ENCODE measurements at regions of chr3 and their contacts with region 1.

Region 1: GRCh38 chr3:58305882-58306711 is at the starts of genes HTD2 and RPP14:
- DNase-seq: peak; percentile 99
- H3K4me3 Mint-ChIP-seq: peak within 1 kb of the TSS; percentile 94
- H3K27ac Mint-ChIP-seq: peak within 1 kb of the TSS; percentile 99
- H3K4me1 Mint-ChIP-seq: peaks cover 36% of the 10 kb centered on the region
- H3K27me3 Mint-ChIP-seq: peaks cover 21% of the 10 kb centered on the region

Region 2: GRCh38 chr3:58177747-58178527 is 128.2 kb before region 1 on chr3:
- CTCF ChIA-PET with region 1: interaction called, 16 read pairs
- DNase-seq: peak; percentile 93
- H3K4me3 Mint-ChIP-seq: peak overlapping the region; percentile 50
- H3K27ac Mint-ChIP-seq: no peak overlapping the region
- H3K4me1 Mint-ChIP-seq: peaks cover 22% of the 10 kb centered on the region
- H3K27me3 Mint-ChIP-seq: peaks cover 53% of the 10 kb centered on the region

Region 3: DNA sequence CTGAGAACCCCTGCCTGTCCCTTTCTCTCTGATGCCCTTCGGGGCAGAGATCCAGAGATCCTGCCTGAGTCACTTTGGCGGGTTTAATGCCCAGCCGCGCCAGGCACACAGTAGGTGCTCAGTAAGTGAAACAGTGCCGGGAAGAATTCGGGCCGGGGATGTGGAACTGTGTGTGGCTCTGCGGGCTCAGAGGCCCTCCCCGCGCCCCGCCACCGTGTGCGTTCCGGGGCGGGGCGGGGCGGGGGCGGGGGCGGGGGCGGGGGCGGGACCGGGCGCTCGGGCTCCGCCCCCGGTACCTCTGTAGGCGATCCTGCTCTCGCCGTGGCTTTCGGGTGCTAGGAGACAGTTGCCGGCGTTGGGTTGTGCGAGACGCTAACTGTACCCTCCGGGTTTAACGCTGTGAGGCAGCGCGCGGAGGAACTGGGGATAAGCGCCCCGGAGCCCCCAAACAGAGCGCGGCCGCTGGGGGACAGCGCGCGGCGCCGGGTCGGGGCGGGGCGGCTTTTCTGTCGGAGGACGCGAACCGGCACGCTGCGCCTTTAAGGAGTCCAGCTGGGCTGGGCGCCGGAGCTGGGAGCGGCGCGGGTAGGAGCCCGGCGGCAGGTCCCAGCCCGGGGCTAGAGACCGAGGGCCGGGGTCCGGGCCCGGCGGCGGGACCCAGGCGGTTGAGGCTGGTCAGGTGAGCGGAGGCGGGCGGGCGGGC is 68.7 kb before region 1 on chr3 and contains the start of gene ABHD6:
- CTCF ChIA-PET with region 1: interaction called, 14 read pairs
- DNase-seq: peak; percentile 82
- H3K4me3 Mint-ChIP-seq: peak within 1 kb of the TSS; percentile 87
- H3K27ac Mint-ChIP-seq: peak within 1 kb of the TSS; percentile 78
- H3K4me1 Mint-ChIP-seq: peaks cover 15% of the 10 kb centered on the region
- H3K27me3 Mint-ChIP-seq: peaks cover 54% of the 10 kb centered on the region

Region 4: GRCh38 chr3:58332575-58333188 is 26.6 kb after region 1 on chr3 and contains the start of gene PXK:
- CTCF ChIA-PET with region 1: interaction called, 20 read pairs
- DNase-seq: peak; percentile 84
- H3K4me3 Mint-ChIP-seq: peak within 1 kb of the TSS; percentile 100
- H3K27ac Mint-ChIP-seq: peak within 1 kb of the TSS; percentile 95
- H3K4me1 Mint-ChIP-seq: peaks cover 39% of the 10 kb centered on the region
- H3K27me3 Mint-ChIP-seq: no peaks in the 10 kb centered on the region

Region 5: DNA sequence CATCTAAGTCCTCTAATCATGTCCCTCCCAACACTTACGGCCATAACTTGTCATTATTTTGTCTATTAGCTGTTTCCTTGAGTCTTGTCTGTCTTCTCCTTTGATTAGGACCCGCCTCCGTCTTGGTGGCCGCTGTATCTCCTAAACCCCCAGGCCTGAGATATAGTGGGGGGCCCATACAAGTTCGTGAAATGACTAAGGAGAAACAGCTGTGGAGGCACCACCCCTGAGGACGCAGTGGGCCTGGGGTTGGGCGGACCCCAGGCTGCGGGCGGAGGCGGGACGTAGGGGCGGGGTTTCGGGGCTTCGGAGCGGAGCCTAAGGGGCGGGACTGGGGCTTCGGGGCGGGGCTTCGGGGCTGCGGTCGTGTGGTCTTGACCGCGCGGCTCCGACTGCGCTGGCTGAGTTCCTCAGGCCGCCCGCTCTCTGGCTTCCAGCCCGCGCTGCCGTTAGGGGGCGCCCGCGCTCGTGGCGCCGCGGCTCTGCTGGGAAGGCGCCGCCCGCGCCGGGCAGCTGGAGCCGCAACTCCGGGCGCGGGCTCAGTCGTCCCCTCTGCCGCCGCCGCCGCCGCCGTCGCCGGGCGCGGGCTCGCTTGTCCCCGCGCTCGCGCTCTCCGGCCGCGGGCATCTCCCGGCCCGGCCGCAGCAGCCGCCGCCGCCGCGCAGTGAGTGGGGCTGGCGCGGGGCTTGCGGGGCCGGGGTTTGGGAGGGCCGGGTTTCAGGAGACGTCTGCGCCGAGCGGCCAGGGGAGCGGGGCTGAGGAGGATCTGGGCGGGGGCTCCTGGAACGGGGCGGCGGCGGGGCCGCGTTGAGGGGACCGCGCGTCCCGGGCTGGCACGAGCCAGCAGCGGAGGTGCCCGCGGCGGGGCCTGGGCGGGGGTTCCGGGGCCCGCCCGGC is 185.7 kb after region 1 on chr3 and contains the start of gene KCTD6:
- CTCF ChIA-PET with region 1: interaction called, 36 read pairs
- DNase-seq: peak; percentile 87
- H3K4me3 Mint-ChIP-seq: peak within 1 kb of the TSS; percentile 82
- H3K27ac Mint-ChIP-seq: peak within 1 kb of the TSS; percentile 73
- H3K4me1 Mint-ChIP-seq: peaks cover 30% of the 10 kb centered on the region
- H3K27me3 Mint-ChIP-seq: peaks cover 44% of the 10 kb centered on the region

Region 6: GRCh38 chr3:58532794-58533220 is 226.7 kb after region 1 on chr3:
- CTCF ChIA-PET with region 1: interaction called, 46 read pairs
- DNase-seq: peak; percentile 83
- H3K4me3 Mint-ChIP-seq: no peak overlapping the region
- H3K27ac Mint-ChIP-seq: no peak overlapping the region
- H3K4me1 Mint-ChIP-seq: peaks cover 12% of the 10 kb centered on the region
- H3K27me3 Mint-ChIP-seq: peaks cover 9% of the 10 kb centered on the region

Measured in activated naive CD4-positive, alpha-beta T cell treated with anti-CD3 and anti-CD28 coated beads, Interleukin-2, amount 10 ng/mL, durations not matched to agents 7 days and 5 days (primary cell).